ENCODE measurements at regions of chr6 and their contacts with region 1.

Region 1: DNA sequence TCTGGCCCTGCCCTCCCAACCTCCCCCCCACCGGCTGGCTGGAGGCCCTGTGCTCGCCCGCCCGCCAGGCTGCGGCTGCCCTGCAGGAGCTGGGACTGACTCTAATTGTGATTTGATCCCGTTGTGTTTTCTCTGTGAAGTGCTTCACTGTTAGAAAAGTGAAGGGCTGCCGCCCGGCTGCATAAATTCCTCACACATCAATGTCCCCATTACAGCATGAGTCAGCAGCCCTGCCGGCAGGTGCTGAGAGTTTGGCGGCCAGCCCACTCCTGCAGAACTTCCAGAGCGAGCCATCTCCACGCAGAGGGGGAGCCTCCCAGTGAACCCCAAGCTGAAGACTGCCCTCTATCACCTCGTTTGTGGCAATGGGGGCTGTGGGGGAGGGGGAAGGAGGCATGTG is 137.9 kb downstream of the DLL1 start:
- DNase-seq: no peak
- H3K4me3 ChIP-seq: no peak overlapping the region
- H3K27ac ChIP-seq: no peak overlapping the region
- H3K4me1 ChIP-seq: peaks cover 7% of the 10 kb centered on the region
- H3K27me3 ChIP-seq: no peaks in the 10 kb centered on the region
- CTCF ChIP-seq: no peak
- POLR2A ChIP-seq: no peak

Region 2: DNA sequence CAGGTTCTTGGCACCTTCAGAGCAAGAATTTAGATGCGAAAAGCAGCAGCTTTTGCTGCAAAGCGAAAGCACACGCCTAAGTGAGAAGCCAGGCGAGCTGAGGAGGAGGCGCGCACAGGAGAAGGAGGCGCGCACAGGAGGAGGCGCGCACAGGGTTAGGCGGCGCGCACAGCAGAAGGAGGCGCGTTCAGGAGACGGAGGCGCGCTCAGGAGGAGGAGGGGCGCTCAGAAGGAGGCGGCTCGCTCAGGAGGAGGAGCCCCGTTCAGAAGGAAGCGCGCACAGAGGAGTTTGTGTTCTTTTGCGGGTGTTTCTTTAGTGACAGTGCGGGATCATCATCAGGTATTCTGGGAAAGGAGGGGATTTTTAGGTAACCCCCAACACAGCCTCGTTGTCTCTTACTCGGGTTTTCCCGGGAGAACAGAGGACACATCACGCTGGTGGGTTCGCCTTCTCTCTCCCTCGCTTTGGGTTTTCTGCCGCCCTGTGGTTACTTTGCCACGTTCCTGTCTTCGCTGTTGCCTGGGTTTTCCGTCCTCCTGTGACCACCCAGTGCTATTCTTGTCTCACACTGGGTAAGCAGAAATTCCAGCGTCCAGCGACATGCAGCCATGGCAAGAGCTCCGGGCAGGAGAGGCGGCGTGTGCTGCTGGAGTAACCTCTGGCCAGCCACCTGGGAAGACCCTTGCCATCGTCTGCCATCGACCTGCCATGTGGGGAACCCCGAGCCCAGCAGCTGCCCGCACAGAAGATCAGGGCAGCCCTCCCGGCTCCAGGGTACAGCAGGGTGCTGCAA is 498.2 kb before region 1 on chr6:
- CTCF ChIA-PET with region 1: no interaction called
- POLR2A ChIA-PET with region 1: no interaction called
- dilution Hi-C with region 1: no loop called
- intact Hi-C with region 1: no loop called
- DNase-seq: peak; percentile 83
- H3K4me3 ChIP-seq: peak overlapping the region in 2 of 3 experiments; percentile 25 to 41
- H3K27ac ChIP-seq: peak overlapping the region; percentile 6
- H3K4me1 ChIP-seq: no peaks in the 10 kb centered on the region
- H3K27me3 ChIP-seq: no peaks in the 10 kb centered on the region
- CTCF ChIP-seq: peak in 1 of 2 donors; percentile 34
- POLR2A ChIP-seq: peak; percentile 25

Region 3: DNA sequence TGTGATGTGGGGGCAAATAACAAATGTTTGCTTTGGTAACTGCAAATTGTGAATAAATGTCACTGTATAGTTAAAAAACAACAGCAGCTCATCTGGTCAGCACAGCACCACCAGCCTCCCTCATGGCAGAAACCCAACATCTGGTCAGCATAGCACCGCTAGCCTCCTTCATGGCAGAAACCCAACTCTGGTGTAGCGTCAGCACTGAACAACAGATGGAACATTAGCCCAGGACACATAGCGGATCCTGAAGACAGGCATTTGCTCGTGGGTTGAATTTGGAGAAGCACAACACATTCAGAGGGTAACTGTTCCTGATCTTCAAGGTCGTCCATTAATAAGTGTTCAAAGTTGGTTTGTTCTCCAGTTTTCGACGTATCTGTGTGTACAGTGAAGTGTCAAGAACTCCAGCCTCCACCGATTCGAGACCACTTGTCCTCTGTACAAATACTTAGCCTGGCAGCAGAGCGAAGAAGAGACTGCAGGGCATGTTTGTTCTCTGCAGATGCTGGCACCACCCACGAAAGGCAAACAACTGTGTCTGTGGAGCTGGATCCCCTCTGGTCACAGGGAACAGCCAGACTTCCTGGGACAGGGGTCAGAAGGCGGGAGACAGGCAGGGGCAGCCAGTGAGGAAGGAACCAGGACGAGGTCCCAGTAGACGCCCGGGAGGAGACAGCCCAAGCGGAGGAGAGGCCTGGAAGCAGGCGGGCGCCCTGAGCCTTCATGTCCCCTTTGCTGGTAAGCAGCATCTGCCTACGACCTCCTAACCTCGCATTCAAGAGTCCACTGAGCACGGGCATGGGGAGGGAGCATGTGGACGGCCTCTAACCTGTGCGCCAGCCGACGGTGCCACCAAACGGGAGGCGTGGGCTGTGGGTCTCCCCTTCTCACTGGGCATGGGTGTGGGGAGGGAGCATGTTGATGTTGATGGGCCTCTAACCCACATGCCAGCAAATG is 127.8 kb before region 1 on chr6:
- CTCF ChIA-PET with region 1: no interaction called
- POLR2A ChIA-PET with region 1: no interaction called
- dilution Hi-C with region 1: no loop called
- intact Hi-C with region 1: no loop called
- DNase-seq: no peak
- H3K4me3 ChIP-seq: no peak overlapping the region
- H3K27ac ChIP-seq: no peak overlapping the region
- H3K4me1 ChIP-seq: no peaks in the 10 kb centered on the region
- H3K27me3 ChIP-seq: no peaks in the 10 kb centered on the region
- CTCF ChIP-seq: no peak
- POLR2A ChIP-seq: no peak

Region 4: DNA sequence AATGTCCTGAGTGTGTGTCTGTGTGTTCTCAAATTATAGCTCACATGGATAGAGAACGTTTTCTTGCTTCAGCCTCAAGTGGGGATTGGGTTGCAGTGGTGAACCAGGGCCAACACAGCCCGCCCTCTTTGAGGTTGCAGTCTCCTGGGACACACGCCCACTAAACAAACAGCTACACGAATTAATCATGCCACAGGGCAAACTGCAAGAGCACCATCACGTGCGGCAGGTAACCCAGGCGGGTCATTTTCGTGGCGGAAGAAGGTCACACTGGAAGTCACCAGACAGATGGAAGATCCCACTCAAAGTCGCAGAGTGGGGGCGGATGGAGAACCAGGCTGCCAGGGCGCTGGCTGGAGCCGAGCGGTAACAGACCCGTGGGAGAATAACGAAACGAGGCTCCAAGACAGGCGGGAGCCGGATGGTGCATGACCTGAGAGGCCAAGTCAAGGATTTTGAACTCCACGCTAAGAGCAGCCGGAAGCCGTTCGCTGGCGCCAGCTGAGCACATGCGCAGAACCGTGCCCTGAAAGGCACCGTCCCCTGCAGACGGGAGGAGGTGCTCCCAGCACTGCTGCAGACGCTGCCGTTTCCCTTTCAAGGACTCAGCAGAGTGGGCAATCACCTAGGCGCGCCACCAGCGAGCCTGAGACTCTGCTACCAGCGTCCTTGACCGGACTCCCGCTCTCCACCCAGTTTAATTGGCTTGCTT is 127.1 kb after region 1 on chr6:
- CTCF ChIA-PET with region 1: no interaction called
- POLR2A ChIA-PET with region 1: no interaction called
- dilution Hi-C with region 1: no loop called
- intact Hi-C with region 1: loop called (anchors 10 kb)
- DNase-seq: peak; percentile 17
- H3K4me3 ChIP-seq: peak overlapping the region in 1 of 3 experiments; percentile 16
- H3K27ac ChIP-seq: no peak overlapping the region
- H3K4me1 ChIP-seq: peaks cover 4% of the 10 kb centered on the region
- H3K27me3 ChIP-seq: peaks cover 0 to 6% of the 10 kb centered on the region in 2 experiments
- CTCF ChIP-seq: no peak
- POLR2A ChIP-seq: no peak